HEK293 (cell line): ENCODE measurements at regions of chr1 and their contacts with region 1.

Region 1: GRCh38 chr1:208025031-208025430 is 114.1 kb upstream of the CD34 start:
- H3K4me3 ChIP-seq: no peak overlapping the region
- H3K27ac ChIP-seq: no peak overlapping the region
- H3K4me1 ChIP-seq: no peaks in the 10 kb centered on the region
- CTCF ChIP-seq: no peak

Region 2: DNA sequence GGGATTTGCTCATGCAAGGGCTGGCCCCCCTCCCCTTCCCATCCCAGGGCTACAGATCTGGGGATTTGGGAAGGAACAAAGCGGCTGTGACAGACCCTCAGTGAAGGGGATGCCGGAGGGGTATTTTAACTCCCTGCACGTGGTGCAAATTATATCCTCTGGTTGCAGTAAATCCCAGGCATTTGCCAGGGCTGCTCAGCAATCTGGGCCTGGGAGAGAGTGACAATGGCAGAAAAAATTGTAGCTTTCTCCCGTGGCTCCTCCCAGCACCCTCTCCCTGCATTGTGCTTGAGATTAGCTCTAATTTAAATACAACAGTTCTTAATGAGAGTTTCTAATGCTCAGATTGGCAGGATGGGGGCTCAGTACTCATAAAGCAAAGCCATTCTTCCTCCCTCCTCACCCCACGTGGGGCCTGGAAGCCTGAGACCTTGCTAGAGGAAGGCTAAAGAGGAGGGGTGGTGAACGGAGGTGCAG is 15.8 kb after region 1 on chr1:
- CTCF ChIA-PET with region 1: interaction called, 17 read pairs
- POLR2A ChIA-PET with region 1: no interaction called
- H3K4me3 ChIP-seq: no peak overlapping the region
- H3K27ac ChIP-seq: no peak overlapping the region
- H3K4me1 ChIP-seq: no peaks in the 10 kb centered on the region
- CTCF ChIP-seq: no peak

Region 3: DNA sequence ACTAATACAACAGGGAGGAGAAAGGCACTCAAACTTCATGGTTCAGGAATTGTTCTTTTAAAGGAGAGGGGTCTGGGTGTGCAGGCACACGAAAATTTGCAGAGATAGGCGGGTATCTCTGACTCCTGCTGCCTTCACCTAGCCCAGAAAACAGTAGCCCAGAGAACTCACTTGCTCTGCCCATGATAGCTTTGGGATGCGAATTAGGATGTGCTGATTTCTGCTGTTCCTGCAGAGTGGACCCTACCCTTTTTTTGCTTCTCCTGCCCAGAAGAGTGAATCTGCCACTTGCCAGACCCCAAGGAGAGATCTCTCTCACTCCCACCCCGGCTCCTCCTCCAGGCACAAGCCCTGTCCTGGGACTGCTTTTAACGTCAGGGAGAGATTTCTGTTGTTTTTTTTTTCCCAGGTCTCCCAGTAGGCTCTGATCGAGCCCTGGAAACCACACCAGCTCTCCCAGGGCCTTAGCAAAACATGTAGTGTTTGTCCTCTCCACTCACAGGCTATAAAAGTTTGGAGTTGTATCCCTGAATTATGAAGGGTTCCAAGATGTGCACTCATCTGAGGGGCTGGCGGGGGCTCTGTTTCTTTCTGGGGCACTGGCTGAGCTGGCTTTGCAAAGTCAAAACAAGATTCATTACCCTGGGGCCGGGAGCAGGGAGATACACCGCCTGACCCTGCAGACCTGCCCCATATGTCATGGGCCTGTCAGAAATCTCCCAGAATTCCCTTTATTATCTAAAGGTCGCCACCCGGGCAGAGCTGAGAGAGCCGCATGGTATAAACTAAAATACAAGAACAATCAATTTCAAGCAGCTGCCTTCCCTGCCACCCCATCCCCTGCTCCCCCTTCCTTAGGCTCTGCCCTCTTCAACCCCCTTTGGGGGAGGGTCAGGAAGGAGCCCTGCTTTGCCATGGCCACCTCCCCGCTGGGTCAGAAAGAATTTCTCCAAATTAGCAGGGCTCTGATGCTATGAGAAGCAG is 201.2 kb after region 1 on chr1:
- CTCF ChIA-PET with region 1: interaction called, 10 read pairs
- POLR2A ChIA-PET with region 1: interaction called, 3 read pairs
- H3K4me3 ChIP-seq: no peak overlapping the region
- H3K27ac ChIP-seq: peak overlapping the region; percentile 30; the same call in 1 of the 2 replicates
- H3K4me1 ChIP-seq: peaks cover 14% of the 10 kb centered on the region
- CTCF ChIP-seq: no peak

Region 4: DNA sequence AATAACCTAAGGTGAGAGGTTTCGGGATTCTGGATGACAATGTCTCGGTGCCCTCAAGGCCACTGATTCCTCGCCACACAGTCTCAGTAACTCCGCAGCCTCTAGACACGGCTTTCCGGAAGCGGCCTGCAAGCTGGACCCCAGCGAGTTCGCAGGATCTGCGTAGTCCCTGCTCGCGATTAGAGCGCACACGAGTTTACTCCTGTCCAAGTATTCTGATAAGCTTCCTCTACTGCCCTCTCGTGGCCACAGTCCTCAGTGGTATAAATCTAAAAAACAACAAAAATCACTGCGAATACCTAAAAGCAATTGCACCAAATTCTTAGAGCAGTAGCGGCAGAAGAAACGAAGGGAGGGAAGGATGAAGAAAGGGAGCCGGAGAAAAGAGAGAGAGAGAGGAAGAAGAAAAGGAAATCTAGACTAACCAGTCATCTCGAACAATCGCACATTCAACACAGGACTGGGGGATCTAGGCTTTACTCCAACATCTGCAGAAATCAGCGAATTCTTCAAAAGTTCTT is 220.2 kb after region 1 on chr1:
- CTCF ChIA-PET with region 1: interaction called, 98 read pairs
- POLR2A ChIA-PET with region 1: interaction called, 24 read pairs
- H3K4me3 ChIP-seq: no peak overlapping the region
- H3K27ac ChIP-seq: peak overlapping the region; percentile 56; the same call in 1 of the 2 replicates
- H3K4me1 ChIP-seq: no peaks in the 10 kb centered on the region; the same call in 1 of the 2 replicates
- CTCF ChIP-seq: peak; percentile 78